AG04450 (cell line): ENCODE measurements at regions of chr7 and their contacts with region 1.

Region 1: GRCh38 chr7:104883718-104884452 is 130.1 kb upstream of the KMT2E start:
- DNase-seq: peak; percentile 39
- H3K4me3 ChIP-seq: no peak overlapping the region
- H3K27ac ChIP-seq: no peak overlapping the region
- H3K27me3 ChIP-seq: peaks cover 11% of the 10 kb centered on the region
- CTCF ChIP-seq: peak; percentile 97

Region 2: DNA sequence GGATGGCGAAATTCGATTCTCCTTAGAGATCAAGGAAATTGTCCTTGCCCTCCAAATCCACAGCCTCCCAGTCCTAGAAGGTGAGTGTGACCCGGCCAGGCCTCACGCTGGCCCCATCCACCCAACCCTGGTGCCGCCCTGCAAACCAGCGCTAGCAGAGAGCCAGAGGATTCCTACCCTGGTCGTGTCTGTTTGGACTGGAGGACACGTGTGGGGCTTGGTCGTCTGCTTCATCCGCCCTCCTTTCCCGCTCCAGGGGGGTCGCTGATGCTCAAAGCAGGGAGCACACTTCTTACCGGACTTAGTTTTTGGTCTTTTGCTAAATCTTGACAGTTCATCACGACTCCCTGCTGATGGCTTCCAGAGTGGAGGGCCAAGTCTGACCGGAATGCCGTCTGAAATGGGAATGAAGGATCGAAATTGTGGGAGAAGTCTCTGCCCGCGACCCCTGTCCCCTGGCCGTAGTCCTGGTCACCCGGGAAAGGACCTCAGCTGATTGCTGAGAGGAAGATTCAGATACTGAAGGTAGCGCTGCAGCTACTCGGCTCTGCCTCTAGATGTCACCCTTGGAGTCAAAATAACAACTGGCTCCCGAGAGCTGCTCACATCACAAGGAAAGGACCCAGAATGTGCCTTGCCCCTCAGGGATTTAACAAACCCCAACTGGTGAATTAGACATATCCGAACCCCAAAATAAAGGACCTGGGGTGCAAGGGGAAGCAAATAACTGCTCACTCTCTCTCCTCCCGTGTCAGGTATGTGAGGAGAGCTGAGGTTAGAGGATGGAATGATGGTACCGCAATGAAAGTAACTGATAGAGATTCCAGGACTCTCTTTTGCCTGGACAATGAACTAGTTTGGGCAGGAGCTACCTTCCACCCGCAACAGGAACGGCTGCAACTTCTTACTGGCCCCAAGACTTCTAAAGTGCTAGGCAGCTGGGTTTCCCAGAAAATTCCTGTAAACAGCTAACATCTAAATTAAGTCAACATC is 652.5 kb before region 1 on chr7:
- CTCF ChIA-PET with region 1: interaction called, 13 read pairs
- POLR2A ChIA-PET with region 1: no interaction called
- DNase-seq: peak; percentile 30
- H3K4me3 ChIP-seq: peak overlapping the region; percentile 38
- H3K27ac ChIP-seq: no peak overlapping the region
- H3K27me3 ChIP-seq: peaks cover 6% of the 10 kb centered on the region
- CTCF ChIP-seq: peak; percentile 93

Region 3: GRCh38 chr7:104241538-104242209 is 642.2 kb before region 1 on chr7:
- CTCF ChIA-PET with region 1: no interaction called
- POLR2A ChIA-PET with region 1: no interaction called
- DNase-seq: no peak
- H3K4me3 ChIP-seq: no peak overlapping the region
- H3K27ac ChIP-seq: no peak overlapping the region
- H3K27me3 ChIP-seq: no peaks in the 10 kb centered on the region
- CTCF ChIP-seq: no peak

Region 4: DNA sequence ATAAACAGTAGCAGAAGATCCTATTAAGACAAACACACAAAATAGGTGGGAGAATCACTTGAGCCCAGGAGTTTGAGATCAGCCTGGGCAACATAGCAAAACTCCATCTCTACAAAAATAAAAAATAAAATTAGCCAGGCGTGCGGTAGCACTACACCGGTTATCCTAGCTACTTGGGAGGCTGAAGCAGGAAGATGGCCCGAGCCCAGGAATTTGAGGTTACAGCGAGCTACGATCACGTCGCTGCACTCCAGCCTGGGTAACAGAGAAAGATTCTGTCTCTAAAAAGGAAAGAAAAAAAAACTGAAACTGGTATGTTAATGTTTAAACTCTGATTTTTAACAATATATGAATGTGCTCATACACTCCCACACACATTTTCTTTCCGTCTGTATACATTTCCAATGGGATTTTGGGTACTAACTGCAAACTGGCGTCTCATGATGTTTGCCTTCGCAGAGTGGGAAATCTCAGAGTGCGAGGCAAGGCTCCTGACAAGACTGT is 10.5 kb before region 1 on chr7:
- CTCF ChIA-PET with region 1: interaction called, 20 read pairs
- POLR2A ChIA-PET with region 1: no interaction called
- DNase-seq: no peak
- H3K4me3 ChIP-seq: no peak overlapping the region
- H3K27ac ChIP-seq: no peak overlapping the region
- H3K27me3 ChIP-seq: peaks cover 3% of the 10 kb centered on the region
- CTCF ChIP-seq: no peak

Region 5: GRCh38 chr7:104900525-104901239 is 16.8 kb after region 1 on chr7:
- CTCF ChIA-PET with region 1: interaction called, 68 read pairs
- POLR2A ChIA-PET with region 1: no interaction called
- DNase-seq: no peak
- H3K4me3 ChIP-seq: no peak overlapping the region
- H3K27ac ChIP-seq: no peak overlapping the region
- H3K27me3 ChIP-seq: peaks cover 8% of the 10 kb centered on the region
- CTCF ChIP-seq: no peak

Region 6: DNA sequence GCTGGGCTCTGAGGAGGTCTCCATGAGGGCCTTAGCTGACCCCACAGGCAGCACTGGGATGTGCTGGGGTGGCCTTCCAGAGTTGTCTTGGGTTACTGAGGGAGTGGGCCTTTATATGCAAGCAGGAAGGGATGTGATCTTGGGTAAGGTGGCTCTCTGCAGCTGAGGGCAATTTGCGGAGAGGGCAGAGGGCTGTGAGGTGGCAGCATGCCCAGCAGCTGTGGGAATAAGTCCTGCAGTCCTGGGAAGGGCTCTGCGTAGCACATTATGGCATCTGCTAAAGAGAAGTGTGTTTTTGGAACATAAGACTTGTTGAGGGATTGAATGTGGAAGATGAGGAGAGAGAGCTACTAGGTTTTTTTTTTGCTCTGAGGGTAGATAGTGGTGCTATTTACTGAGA is 30.5 kb after region 1 on chr7:
- CTCF ChIA-PET with region 1: interaction called, 311 read pairs
- POLR2A ChIA-PET with region 1: no interaction called
- DNase-seq: no peak
- H3K4me3 ChIP-seq: no peak overlapping the region
- H3K27ac ChIP-seq: no peak overlapping the region
- H3K27me3 ChIP-seq: peaks cover 4% of the 10 kb centered on the region
- CTCF ChIP-seq: no peak

Region 7: DNA sequence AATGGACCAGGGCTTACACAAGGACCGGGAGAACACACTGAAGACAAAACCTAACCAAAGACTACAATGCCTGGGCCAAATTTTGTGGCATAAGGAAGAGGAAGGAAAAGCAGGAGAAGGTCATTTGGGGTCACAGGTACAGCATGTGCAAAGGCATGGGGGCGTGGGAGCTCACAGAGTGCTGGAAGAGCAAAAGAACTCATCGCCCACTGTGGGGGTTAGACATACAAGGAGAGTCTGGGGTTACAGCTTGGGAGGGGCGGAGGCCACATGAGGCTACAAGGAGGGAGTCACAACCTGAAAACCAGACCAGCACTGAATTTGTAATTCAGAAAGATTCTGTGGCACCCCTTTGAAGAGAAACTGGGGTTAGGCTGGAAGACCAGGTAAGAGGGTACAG is 628.5 kb after region 1 on chr7:
- CTCF ChIA-PET with region 1: no interaction called
- POLR2A ChIA-PET with region 1: no interaction called
- DNase-seq: no peak
- H3K4me3 ChIP-seq: no peak overlapping the region
- H3K27ac ChIP-seq: no peak overlapping the region
- H3K27me3 ChIP-seq: no peaks in the 10 kb centered on the region
- CTCF ChIP-seq: no peak

Region 8: DNA sequence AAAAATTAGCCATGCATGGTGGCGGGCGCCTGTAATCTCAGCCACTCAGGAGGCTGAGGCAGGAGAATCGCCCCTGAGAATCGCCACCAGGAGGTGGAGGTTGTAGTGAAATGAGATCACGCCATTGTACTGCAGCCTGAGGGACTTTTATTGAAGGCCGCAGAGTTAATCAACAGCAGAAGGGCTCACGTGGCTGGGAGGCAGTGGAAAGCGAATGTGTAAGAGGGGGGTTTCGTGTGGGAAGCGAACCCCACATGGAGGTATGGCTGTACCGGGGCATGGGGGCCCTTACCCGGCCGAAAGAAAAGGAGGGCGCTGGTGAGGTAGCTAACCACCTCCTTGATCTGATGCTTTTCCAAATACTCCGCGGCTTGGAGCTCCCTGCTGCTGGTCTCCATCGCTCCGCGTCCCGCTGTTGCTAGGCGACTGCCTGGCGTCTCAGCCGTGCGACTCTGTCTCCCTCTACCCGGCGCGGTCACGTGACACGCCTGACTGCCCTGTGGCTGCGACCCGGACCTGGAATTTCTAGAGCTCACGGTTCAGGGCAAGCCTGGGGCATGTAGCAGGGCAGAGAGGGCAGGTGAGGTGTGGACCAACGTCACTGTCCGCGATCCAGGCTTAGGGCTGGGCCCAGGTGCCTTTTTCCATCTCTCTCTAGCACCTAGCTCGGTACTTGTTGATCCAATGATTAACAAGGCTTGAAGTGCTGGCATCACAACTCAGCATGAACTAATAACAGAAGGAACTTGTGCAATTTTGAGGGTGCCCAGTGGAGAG is 697.4 kb after region 1 on chr7 and contains the start of gene EFCAB10:
- CTCF ChIA-PET with region 1: no interaction called
- POLR2A ChIA-PET with region 1: no interaction called
- DNase-seq: no peak
- H3K4me3 ChIP-seq: peak within 1 kb of the TSS; percentile 56
- H3K27ac ChIP-seq: no peak within 1 kb of the TSS
- H3K27me3 ChIP-seq: no peaks in the 10 kb centered on the region
- CTCF ChIP-seq: no peak
- polyA plus RNA-seq, gene EFCAB10: not detected in 2 replicates